MCF 10A (cell line): ENCODE measurements at regions of chr5 and their contacts with region 1.

Region 1: GRCh38 chr5:72402959-72403628 is 82.9 kb downstream of the PTCD2 start:
- DNase-seq: no peak
- H3K4me3 Mint-ChIP-seq: no peak overlapping the region
- H3K27ac Mint-ChIP-seq: peak overlapping the region; percentile 82
- H3K4me1 Mint-ChIP-seq: peaks cover 13% of the 10 kb centered on the region
- H3K27me3 Mint-ChIP-seq: no peaks in the 10 kb centered on the region
- CTCF ChIP-seq: peak; percentile 24

Region 2: DNA sequence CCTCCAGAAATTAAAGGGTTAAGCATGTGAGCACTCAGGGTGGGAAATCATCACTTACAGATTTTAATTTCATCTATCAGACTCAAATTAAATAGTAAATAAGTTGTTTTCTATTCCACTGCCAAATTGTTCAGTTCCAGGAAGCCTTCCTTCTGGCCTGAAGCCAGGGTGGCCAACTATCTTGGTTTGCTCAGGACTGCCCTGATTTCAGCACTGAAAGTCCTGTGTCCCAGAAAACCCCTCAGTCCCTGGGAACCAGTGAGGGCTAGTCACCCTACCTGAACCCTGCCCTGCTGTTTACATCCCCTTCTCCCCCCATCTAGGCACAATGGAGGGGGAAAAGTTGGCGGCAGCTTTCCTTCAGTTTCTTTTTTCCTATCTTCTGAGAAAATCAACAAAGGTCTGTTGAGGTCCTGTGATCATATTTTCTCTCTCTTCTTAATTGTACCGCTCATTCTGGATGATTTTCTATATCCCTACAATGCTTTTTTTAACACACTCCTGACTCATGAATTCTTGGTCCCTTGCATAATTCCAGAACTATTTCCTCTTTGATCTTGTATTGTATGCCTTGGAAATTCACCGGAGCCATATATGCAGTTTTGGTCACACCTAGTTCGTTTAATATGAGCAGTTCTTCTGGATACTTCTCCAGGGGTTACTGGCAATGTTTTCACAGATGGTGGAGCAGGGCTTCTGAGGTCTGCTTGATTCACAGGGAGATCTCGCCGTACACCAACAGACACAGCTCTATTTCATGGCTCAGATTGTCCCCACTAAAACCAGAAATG is 192.0 kb before region 1 on chr5:
- CTCF ChIA-PET with region 1: no interaction called
- POLR2A ChIA-PET with region 1: no interaction called
- intact Hi-C with region 1: no loop called
- DNase-seq: peak; percentile 74
- H3K4me3 Mint-ChIP-seq: peak overlapping the region; percentile 24
- H3K27ac Mint-ChIP-seq: peak overlapping the region; percentile 13
- H3K4me1 Mint-ChIP-seq: peaks cover 17% of the 10 kb centered on the region
- H3K27me3 Mint-ChIP-seq: no peaks in the 10 kb centered on the region
- CTCF ChIP-seq: no peak

Region 3: GRCh38 chr5:72328172-72328571 is 74.9 kb before region 1 on chr5:
- CTCF ChIA-PET with region 1: no interaction called
- POLR2A ChIA-PET with region 1: no interaction called
- intact Hi-C with region 1: no loop called
- DNase-seq: peak; percentile 89
- H3K4me3 Mint-ChIP-seq: no peak overlapping the region
- H3K27ac Mint-ChIP-seq: peak overlapping the region; percentile 66
- H3K4me1 Mint-ChIP-seq: peaks cover 40% of the 10 kb centered on the region
- H3K27me3 Mint-ChIP-seq: no peaks in the 10 kb centered on the region
- CTCF ChIP-seq: no peak

Region 4: GRCh38 chr5:72387985-72388384 is 15.1 kb before region 1 on chr5:
- CTCF ChIA-PET with region 1: interaction called, 19 read pairs
- POLR2A ChIA-PET with region 1: interaction called, 24 read pairs
- intact Hi-C with region 1: no loop called
- DNase-seq: peak; percentile 71
- H3K4me3 Mint-ChIP-seq: peak overlapping the region; percentile 20
- H3K27ac Mint-ChIP-seq: peak overlapping the region; percentile 91
- H3K4me1 Mint-ChIP-seq: peaks cover 65% of the 10 kb centered on the region
- H3K27me3 Mint-ChIP-seq: no peaks in the 10 kb centered on the region
- CTCF ChIP-seq: no peak